AG04450 (cell line): ENCODE measurements at regions of chr2 and their contacts with region 1.

Region 1: DNA sequence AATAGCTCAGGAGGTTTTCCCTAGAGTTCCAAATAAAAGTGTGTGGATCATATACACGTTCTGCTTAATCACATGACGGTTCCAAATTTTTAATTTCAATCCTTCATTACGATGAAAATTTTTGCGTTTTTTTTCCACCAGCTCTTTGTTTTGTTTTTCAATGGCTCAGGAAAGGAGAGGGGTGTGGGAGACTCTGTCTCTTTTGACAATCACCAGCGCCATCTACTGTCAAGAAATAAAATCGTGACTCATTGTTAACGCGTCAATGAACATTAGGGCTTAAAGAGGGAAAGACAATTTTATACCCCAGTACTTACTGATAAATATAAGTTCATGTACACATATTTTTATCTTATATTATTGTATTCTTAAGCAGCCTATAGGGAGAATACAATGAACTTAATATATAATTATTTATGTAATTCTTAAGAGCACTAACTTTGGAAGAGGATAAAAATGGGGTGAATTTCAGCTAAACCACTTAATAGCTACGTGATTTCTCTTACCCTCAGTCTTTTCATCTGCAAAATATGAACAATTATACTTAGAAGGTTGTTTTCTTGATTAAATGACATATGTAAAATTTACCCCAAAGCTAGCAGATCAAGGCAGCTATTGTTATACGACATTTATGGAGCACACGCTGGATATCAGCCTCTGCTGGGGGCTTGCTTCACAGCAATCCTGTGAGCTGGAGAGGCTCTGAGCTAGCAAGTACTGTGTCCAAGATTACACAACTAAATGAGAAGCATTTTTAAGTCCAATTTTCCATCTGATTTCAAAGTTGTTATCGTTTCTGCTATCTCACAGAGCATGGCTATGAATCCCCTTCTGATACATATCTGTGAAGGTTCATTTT is 47.4 kb upstream of the RMDN2 start:
- DNase-seq: no peak
- H3K4me3 ChIP-seq: no peak overlapping the region
- H3K27ac ChIP-seq: no peak overlapping the region
- H3K27me3 ChIP-seq: no peaks in the 10 kb centered on the region
- CTCF ChIP-seq: peak; percentile 65

Region 2: DNA sequence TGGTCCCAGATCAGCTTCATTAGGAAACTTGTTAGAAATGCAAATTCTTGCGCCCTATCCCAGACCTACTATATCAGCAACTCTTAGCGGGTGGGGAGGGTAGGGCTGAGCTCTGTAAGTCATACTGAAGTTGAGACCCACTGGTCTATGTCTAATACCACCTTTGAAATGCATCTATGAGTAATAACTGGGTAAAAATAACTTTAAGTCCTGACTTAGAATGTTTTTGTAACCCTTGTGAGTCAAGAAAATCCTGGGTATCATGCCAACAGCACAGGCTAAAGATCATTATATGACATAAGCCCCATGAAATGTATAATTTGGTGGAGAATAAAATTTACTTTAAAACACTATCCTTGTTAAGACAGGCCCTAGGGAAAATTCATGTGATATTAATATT is 594.5 kb before region 1 on chr2:
- CTCF ChIA-PET with region 1: interaction called, 10 read pairs
- POLR2A ChIA-PET with region 1: no interaction called
- DNase-seq: peak; percentile 60
- H3K4me3 ChIP-seq: no peak overlapping the region
- H3K27ac ChIP-seq: peak overlapping the region; percentile 49
- H3K27me3 ChIP-seq: no peaks in the 10 kb centered on the region
- CTCF ChIP-seq: no peak

Region 3: DNA sequence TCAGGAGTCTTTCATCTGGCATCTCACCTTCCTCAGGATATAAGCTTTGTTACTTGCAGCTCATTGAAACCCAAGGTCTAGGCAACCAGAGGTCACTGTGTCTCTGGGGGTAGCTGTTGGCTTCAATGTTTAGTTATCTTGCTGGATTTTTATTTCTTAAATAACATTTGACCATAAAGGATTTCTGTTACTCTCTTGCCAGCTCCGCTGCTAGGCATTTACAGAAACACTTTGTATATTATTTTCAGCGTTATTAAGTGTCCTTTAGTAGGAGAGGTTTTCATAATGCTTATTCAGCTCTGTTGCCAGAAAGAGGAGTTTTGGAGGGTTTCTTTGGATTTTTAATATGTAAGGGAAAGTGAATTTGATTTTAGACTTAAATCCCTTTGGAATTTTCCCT is 471.9 kb before region 1 on chr2:
- CTCF ChIA-PET with region 1: interaction called, 277 read pairs
- POLR2A ChIA-PET with region 1: no interaction called
- DNase-seq: no peak
- H3K4me3 ChIP-seq: no peak overlapping the region
- H3K27ac ChIP-seq: no peak overlapping the region
- H3K27me3 ChIP-seq: no peaks in the 10 kb centered on the region
- CTCF ChIP-seq: no peak

Region 4: GRCh38 chr2:37523814-37524362 is 353.8 kb before region 1 on chr2:
- CTCF ChIA-PET with region 1: interaction called, 10 read pairs
- POLR2A ChIA-PET with region 1: no interaction called
- DNase-seq: peak; percentile 47
- H3K4me3 ChIP-seq: no peak overlapping the region
- H3K27ac ChIP-seq: no peak overlapping the region
- H3K27me3 ChIP-seq: no peaks in the 10 kb centered on the region
- CTCF ChIP-seq: no peak

Region 5: GRCh38 chr2:37672104-37672869 is 205.4 kb before region 1 on chr2:
- CTCF ChIA-PET with region 1: interaction called, 22 read pairs
- POLR2A ChIA-PET with region 1: no interaction called
- DNase-seq: peak; percentile 82
- H3K4me3 ChIP-seq: peak overlapping the region; percentile 90
- H3K27ac ChIP-seq: peak overlapping the region; percentile 33
- H3K27me3 ChIP-seq: no peaks in the 10 kb centered on the region
- CTCF ChIP-seq: no peak

Region 6: GRCh38 chr2:37851828-37852584 is 25.7 kb before region 1 on chr2:
- CTCF ChIA-PET with region 1: interaction called, 14 read pairs
- POLR2A ChIA-PET with region 1: no interaction called
- DNase-seq: no peak
- H3K4me3 ChIP-seq: no peak overlapping the region
- H3K27ac ChIP-seq: no peak overlapping the region
- H3K27me3 ChIP-seq: peaks cover 2% of the 10 kb centered on the region
- CTCF ChIP-seq: no peak

Region 7: DNA sequence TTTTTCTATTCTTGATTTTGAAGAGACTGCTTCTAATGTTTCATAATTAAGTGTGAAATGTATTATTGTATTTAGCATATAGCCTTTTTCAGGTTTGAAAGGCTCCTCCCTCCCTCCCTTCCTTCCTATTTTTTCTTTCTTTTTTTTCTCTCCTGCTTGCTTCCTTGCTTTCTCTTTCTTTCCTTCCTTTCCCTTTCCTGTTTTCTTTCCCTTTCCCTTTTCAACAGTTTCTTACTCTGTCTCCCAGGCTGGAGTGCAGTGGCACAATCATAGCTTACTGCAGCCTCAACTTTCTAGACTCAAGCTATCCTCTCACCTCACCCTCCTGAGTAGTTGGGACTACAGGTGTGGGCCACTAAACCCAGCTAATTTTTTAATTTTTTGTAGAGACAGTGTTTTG is 92.0 kb after region 1 on chr2:
- CTCF ChIA-PET with region 1: no interaction called
- POLR2A ChIA-PET with region 1: no interaction called
- DNase-seq: no peak
- H3K4me3 ChIP-seq: no peak overlapping the region
- H3K27ac ChIP-seq: no peak overlapping the region
- H3K27me3 ChIP-seq: no peaks in the 10 kb centered on the region
- CTCF ChIP-seq: no peak